ENCODE measurements at regions of chr3 and their contacts with region 1.

Region 1: DNA sequence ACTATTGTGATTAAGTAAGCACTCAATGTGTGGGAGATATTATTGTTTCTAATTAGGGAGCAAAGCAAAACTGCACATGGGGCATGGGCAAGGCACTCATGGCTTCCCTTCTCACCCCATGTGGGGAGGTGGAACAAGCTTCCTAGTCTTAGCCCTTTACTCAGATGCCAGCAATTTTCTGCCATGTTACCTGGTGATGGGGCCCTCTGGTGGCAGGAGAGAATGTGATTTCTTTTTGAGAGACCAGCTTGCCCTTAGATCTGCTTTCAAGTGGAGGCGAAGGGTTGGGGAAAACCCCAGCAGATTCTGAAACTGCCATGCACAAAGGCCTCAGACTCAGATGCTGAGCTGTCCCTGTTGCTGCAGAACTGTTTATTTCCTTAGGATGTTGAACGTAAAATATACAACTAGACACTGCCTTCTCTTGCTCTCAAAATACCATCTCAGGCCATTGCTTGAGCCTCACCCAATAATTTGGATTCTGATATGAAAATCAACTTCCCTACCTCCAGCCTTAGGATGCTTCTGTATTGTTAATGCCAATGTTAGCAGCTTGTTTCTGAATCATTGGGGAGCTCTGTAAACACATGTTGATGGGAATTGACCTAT is 130.2 kb upstream of the TPRG1 start:
- DNase-seq: peak; percentile 83
- ATAC-seq: peak; percentile 97
- H3K4me3 Mint-ChIP-seq: no peak overlapping the region
- H3K27ac Mint-ChIP-seq: peak overlapping the region; percentile 48
- H3K4me1 Mint-ChIP-seq: peaks cover 42% of the 10 kb centered on the region
- H3K27me3 Mint-ChIP-seq: no peaks in the 10 kb centered on the region

Region 2: DNA sequence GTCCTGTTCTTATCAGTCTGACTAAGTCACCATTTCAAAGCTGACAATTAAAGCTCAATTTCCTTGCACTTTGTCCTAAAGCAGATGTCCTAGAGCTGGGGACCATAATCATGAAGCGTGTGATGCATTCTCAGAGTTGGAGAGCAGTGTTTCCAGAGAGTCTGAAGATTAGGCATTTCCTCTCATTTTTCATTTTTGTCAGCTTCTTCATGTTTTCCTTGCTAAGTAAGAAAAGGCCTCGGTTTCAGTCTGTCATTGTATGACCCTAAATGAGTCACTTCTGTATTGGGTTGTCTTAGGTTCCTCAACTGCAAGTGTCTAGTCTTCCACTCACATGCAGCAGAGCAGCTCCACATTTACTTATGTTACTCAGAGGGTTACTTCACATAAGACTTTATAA is 127.0 kb before region 1 on chr3:
- CTCF ChIA-PET with region 1: interaction called, 10 read pairs
- POLR2A ChIA-PET with region 1: interaction called, 3 read pairs
- DNase-seq: no peak
- ATAC-seq: peak; percentile 51
- H3K4me3 Mint-ChIP-seq: no peak overlapping the region
- H3K27ac Mint-ChIP-seq: peak overlapping the region; percentile 76
- H3K4me1 Mint-ChIP-seq: peaks cover 41% of the 10 kb centered on the region
- H3K27me3 Mint-ChIP-seq: no peaks in the 10 kb centered on the region

Region 3: GRCh38 chr3:188947401-188948280 is 93.9 kb before region 1 on chr3:
- CTCF ChIA-PET with region 1: interaction called, 155 read pairs
- POLR2A ChIA-PET with region 1: interaction called, 4 read pairs
- DNase-seq: peak; percentile 47
- ATAC-seq: peak; percentile 49
- H3K4me3 Mint-ChIP-seq: peak overlapping the region; percentile 27
- H3K27ac Mint-ChIP-seq: no peak overlapping the region
- H3K4me1 Mint-ChIP-seq: peaks cover 8% of the 10 kb centered on the region
- H3K27me3 Mint-ChIP-seq: peaks cover 3% of the 10 kb centered on the region

Region 4: DNA sequence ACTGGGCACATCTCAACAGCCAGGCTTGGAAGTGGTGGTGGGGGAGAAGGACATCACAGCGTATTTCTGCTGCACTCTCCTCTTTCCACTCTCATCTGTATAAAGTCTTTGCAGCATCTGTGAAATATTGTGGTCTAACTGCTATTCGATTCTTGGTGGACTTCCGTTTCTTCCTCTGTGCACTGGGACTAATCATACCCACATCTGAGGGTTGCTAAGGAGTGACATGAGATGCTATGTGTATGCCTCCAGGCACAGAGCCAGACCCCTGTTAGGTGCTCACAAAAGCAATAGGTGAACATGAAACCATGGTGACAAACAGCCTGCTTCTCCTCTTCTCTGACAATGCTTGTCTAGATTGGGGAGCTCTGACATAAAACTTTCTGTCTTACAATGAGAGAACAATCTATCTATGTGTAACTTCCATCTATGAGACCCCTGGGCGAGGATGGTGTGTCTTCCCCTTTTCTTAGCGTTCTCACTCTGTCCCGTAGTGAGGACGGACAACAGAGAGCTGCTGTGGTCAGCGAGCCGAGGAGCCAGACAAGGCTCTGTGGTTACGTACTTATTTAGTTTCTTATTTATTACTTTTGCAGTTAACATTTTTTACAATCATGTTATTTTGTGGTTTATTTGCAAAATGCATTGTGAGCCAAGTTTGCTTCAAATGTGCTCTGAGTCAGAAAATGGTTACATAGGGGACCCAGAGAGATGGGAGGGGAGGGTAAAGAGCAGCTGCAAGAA is 66.6 kb before region 1 on chr3:
- CTCF ChIA-PET with region 1: interaction called, 35 read pairs
- POLR2A ChIA-PET with region 1: interaction called, 3 read pairs
- DNase-seq: peak; percentile 55
- ATAC-seq: peak; percentile 96
- H3K4me3 Mint-ChIP-seq: no peak overlapping the region
- H3K27ac Mint-ChIP-seq: peak overlapping the region; percentile 11
- H3K4me1 Mint-ChIP-seq: peaks cover 37% of the 10 kb centered on the region
- H3K27me3 Mint-ChIP-seq: peaks cover 7% of the 10 kb centered on the region

Region 5: DNA sequence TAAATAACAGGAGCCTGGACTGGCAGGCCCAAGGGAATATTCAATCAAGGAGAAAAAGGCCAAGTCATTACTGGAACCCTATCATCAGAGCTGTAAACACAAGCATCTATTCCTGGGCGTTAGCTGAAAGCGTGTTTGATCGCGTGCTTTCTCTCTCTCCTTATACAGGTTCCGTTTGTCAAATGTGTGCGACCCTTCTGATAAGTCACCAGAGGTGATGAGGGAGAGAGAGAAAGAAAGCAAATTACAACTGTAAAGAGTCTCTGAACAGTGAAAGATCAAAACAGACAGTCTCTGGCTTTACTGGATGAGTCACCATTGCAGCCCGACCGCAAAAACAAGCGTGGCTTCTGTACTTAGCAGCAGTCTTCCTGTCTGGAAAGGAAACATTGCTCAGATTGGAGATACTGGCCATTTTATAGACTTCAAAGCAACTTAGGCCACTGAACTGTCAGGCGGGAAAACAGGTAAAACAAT is 90.7 kb after region 1 on chr3:
- CTCF ChIA-PET with region 1: interaction called, 21 read pairs
- POLR2A ChIA-PET with region 1: no interaction called
- DNase-seq: peak; percentile 89
- ATAC-seq: peak; percentile 98
- H3K4me3 Mint-ChIP-seq: peak overlapping the region; percentile 60
- H3K27ac Mint-ChIP-seq: peak overlapping the region; percentile 93
- H3K4me1 Mint-ChIP-seq: peaks cover 28% of the 10 kb centered on the region
- H3K27me3 Mint-ChIP-seq: no peaks in the 10 kb centered on the region

Region 6: GRCh38 chr3:189137416-189137815 is 95.8 kb after region 1 on chr3:
- CTCF ChIA-PET with region 1: interaction called, 51 read pairs
- POLR2A ChIA-PET with region 1: interaction called, 3 read pairs
- DNase-seq: no peak
- ATAC-seq: no peak
- H3K4me3 Mint-ChIP-seq: no peak overlapping the region
- H3K27ac Mint-ChIP-seq: no peak overlapping the region
- H3K4me1 Mint-ChIP-seq: peaks cover 30% of the 10 kb centered on the region
- H3K27me3 Mint-ChIP-seq: no peaks in the 10 kb centered on the region

Region 7: GRCh38 chr3:189148081-189148507 is 106.5 kb after region 1 on chr3:
- CTCF ChIA-PET with region 1: interaction called, 51 read pairs
- POLR2A ChIA-PET with region 1: no interaction called
- DNase-seq: peak; percentile 79
- ATAC-seq: peak; percentile 61
- H3K4me3 Mint-ChIP-seq: no peak overlapping the region
- H3K27ac Mint-ChIP-seq: no peak overlapping the region
- H3K4me1 Mint-ChIP-seq: peaks cover 24% of the 10 kb centered on the region
- H3K27me3 Mint-ChIP-seq: no peaks in the 10 kb centered on the region